ENCODE measurements at regions of chr4 and their contacts with region 1.

Region 1: GRCh38 chr4:82268050-82268825 is 105.6 kb downstream of the HNRNPD start:
- DNase-seq: peak; percentile 47 to 59
- H3K4me3 ChIP-seq: no peak overlapping the region
- H3K27ac ChIP-seq: no peak overlapping the region
- H3K4me1 ChIP-seq: peaks cover 0 to 6% of the 10 kb centered on the region in 2 donors
- H3K27me3 ChIP-seq: no peaks in the 10 kb centered on the region
- CTCF ChIP-seq: peak; percentile 17 to 72 (median 60)
- POLR2A ChIP-seq: no peak

Region 2: DNA sequence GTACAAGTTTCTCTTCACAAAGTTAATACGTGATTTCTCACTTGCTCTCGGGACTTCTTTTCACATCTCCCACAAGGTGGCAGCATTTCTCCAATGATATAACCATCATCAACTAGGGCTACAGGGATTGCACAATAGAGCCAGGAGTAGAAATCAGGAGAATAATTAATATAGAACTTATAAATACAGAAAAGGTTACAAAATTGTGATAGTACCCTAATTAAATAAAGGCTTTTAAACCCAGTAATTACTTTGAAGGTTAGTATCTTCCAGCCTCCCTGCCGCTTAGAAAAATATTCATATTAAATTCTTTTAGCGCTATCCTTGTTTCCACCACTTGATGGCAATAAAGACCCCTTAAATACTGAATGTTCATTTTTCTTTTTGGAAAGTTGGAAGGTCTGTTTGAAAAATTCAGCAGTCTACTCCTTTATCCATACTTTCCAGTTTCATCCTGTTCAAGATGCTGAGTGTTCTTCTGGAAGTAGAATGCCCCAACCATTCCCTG is 862.3 kb before region 1 on chr4:
- intact Hi-C with region 1: loop called (anchors 10 kb)
- DNase-seq: peak; percentile 9 to 30
- H3K4me3 ChIP-seq: no peak overlapping the region
- H3K27ac ChIP-seq: no peak overlapping the region
- H3K4me1 ChIP-seq: no peaks in the 10 kb centered on the region
- H3K27me3 ChIP-seq: no peaks in the 10 kb centered on the region
- CTCF ChIP-seq: peak; percentile 57 to 86 (median 78)
- POLR2A ChIP-seq: no peak

Region 3: DNA sequence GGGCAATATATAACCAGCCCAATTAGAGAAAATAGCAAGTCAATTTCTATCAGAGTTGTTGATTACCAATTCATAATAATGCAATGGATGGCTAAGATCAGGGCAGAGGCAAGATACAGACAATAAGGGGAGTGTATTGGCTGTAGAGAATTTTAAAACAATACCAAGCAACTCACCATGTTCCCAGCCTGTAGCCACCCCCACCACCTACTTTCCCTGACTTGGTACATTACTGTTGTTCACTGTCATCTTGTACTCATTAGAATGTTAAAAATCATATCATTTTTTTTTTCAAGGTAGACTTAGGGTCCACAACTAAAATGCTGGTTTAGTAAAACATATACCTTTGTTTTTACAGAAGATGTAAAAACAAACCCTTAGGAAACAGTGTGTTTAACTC is 77.9 kb after region 1 on chr4:
- intact Hi-C with region 1: no loop called
- DNase-seq: no peak
- H3K4me3 ChIP-seq: no peak overlapping the region
- H3K27ac ChIP-seq: no peak overlapping the region
- H3K4me1 ChIP-seq: no peaks in the 10 kb centered on the region
- H3K27me3 ChIP-seq: no peaks in the 10 kb centered on the region
- CTCF ChIP-seq: no peak
- POLR2A ChIP-seq: no peak